Activated CD8-positive, alpha-beta T cell treated with anti-CD3 and anti-CD28 coated beads, Interleukin-2, amount 10 ng/mL, durations not matched to agents 7 days and 5 days (primary cell): ENCODE measurements at regions of chr4 and their contacts with region 1.

Region 1: GRCh38 chr4:102610007-102610406 is 108.8 kb downstream of the NFKB1 start:
- DNase-seq: no peak
- ATAC-seq: no peak
- H3K4me3 Mint-ChIP-seq: peak overlapping the region; percentile 13
- H3K27ac Mint-ChIP-seq: peak overlapping the region; percentile 63
- H3K4me1 Mint-ChIP-seq: peaks cover 92% of the 10 kb centered on the region
- H3K27me3 Mint-ChIP-seq: no peaks in the 10 kb centered on the region

Region 2: DNA sequence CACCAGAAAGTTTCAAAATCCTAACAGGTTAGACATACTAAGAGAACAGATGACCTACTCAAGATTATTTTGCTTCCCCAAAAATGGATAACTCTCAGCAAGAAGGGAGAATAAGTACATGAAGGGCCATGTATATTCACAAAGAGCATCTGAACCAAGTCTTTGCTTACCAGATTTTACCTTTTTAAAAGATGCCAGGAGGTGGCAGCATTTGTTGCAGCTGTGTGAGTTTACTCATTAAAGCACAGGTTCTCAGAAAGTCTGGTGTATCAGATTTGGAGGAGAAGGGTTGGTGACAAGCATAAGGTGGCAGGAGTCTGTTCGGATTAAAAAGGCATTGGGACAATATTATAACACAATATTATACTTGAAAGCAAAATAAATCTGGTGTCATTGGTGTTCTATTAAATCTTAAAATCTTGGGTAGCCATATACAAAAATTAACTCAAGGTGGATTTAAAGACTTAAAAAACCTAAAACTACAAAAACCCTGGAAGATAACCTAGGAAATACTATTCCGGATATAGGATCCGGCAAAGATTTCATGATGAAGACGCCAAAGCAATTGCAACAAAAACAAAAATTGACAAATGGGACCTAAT is 160.2 kb before region 1 on chr4:
- CTCF ChIA-PET with region 1: interaction called, 11 read pairs
- POLR2A ChIA-PET with region 1: no interaction called
- DNase-seq: peak; percentile 81
- ATAC-seq: peak; percentile 70
- H3K4me3 Mint-ChIP-seq: no peak overlapping the region
- H3K27ac Mint-ChIP-seq: no peak overlapping the region
- H3K4me1 Mint-ChIP-seq: peaks cover 41% of the 10 kb centered on the region
- H3K27me3 Mint-ChIP-seq: peaks cover 2% of the 10 kb centered on the region

Region 3: GRCh38 chr4:102578819-102579218 is 31.2 kb before region 1 on chr4:
- CTCF ChIA-PET with region 1: interaction called, 21 read pairs
- POLR2A ChIA-PET with region 1: no interaction called
- DNase-seq: peak; percentile 48
- ATAC-seq: no peak
- H3K4me3 Mint-ChIP-seq: no peak overlapping the region
- H3K27ac Mint-ChIP-seq: peak overlapping the region; percentile 60
- H3K4me1 Mint-ChIP-seq: peaks cover 80% of the 10 kb centered on the region
- H3K27me3 Mint-ChIP-seq: no peaks in the 10 kb centered on the region

Region 4: DNA sequence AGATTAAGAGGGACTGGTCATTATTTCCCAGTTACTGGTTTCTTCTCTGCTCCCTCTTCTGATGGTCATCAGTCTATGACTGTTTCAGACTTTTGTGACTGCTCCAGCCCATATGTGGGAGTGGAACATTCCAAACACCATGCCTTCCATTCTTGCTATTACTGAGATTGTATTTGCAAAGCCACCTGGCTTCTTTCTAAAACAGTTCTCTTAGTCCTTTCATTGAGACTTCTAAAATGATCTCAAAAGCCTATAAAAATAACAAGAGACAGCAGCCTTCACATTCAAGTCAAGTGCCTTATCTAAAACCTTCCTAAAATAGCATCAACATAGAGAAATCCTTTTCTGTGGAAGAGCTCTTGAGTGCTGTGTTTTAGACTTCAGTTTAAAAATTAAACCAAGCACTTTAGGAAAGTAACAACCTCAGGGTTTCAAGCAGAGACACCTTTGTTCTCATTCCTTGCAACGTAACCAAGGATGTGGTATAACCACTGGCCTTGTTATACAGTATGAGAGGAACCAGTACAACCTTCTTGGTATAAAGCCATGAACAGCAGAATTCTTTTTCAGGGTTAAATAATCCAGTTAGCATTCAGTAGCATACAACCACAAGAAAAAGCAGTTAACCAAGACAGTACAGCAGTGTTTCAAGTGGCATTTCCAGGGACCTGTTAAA is 11.8 kb before region 1 on chr4:
- CTCF ChIA-PET with region 1: interaction called, 39 read pairs
- POLR2A ChIA-PET with region 1: interaction called, 6 read pairs
- DNase-seq: peak; percentile 75
- ATAC-seq: peak; percentile 93
- H3K4me3 Mint-ChIP-seq: peak overlapping the region; percentile 61
- H3K27ac Mint-ChIP-seq: peak overlapping the region; percentile 98
- H3K4me1 Mint-ChIP-seq: peaks cover 84% of the 10 kb centered on the region
- H3K27me3 Mint-ChIP-seq: no peaks in the 10 kb centered on the region

Region 5: DNA sequence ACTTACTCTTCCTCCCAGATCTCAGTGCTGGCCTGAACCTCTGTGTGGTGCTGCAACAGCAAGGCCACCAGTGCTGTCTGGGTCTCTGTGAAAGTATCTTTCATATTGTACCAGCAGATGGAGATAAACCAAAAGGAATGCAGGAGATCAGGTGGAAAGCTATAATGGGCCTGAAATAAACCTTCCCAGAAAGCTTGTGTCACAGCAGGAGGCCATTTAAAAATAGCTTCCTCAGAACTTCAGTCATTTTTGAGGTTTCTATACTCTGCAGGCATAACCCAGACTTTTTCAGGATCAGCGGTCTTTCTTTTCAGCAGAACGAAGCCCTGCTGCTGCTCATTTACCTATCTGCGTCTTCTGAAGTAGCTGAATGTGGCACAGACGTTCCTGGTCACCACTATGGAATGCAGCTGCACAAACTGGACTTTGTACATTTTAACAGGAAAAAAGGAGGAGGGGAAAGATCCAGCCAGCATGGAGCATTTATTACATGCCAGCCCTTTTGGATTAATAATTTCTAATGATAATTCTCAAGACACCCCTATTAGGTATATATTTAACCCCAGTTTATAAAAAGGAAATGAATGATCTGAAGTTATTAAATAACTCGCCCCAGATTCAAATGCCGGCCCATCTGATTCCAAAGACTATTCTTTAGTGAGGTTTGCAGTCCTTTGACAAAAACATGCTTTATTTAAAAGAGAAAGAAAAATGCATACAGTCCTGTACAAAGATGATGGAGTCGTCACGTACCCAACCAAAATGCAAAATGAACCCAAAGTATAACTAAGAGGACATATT is 10.9 kb after region 1 on chr4:
- CTCF ChIA-PET with region 1: interaction called, 15 read pairs
- POLR2A ChIA-PET with region 1: interaction called, 4 read pairs
- DNase-seq: no peak
- ATAC-seq: peak; percentile 20
- H3K4me3 Mint-ChIP-seq: no peak overlapping the region
- H3K27ac Mint-ChIP-seq: peak overlapping the region; percentile 44
- H3K4me1 Mint-ChIP-seq: peaks cover 68% of the 10 kb centered on the region
- H3K27me3 Mint-ChIP-seq: no peaks in the 10 kb centered on the region